ENCODE measurements at regions of chr11 and their contacts with region 1.

Region 1: DNA sequence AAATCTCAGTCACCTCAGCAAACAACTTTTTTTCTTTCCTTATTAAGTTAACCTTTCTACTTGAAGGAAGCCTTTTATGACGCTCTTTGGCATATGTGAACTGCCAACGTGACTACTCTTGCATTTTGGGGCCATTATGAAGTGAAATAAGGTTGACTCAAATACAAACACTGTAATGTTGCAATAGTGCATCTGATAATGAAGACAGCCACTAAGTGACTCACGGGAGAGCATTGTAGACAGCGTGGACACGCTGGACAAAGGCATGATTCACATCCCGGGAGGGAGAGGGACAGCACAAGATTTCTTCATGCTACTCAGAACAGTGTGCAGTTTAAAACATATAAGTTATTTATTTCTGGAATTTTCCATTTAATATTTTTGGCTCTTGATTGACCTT is 560.8 kb downstream of the ETS1 start:
- DNase-seq: no peak
- H3K4me3 ChIP-seq: no peak overlapping the region
- H3K4me3 Mint-ChIP-seq: no peak overlapping the region
- H3K27ac ChIP-seq: no peak overlapping the region
- H3K27ac Mint-ChIP-seq: no peak overlapping the region
- H3K4me1 ChIP-seq: no peaks in the 10 kb centered on the region
- H3K4me1 Mint-ChIP-seq: peaks cover 0 to 4% (median 1%) of the 10 kb centered on the region in 4 donors
- H3K27me3 ChIP-seq: no peaks in the 10 kb centered on the region
- H3K27me3 Mint-ChIP-seq: peaks cover 3 to 4% of the 10 kb centered on the region in 2 donors

Region 2: DNA sequence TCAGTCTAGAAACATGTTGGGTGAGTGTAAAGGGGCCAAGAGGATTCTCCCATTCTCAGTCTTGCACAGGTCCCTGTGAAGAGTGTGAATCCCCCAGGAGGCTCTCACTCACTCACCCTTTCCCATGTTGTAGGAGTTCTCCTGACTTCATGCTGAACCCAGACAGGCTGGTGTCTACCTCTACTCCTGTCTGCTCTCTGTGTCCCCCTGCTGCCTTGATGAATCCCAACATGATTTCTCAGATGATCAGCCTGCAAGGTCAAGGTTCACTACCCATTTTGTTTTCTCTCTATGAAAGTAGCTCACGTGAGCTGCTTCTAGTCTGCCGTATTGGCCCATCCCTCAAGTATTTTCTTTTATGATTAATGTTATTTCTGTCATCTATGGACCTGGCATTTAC is 60.2 kb after region 1 on chr11:
- CTCF ChIA-PET with region 1: interaction called, 11 read pairs
- POLR2A ChIA-PET with region 1: interaction called, 3 read pairs
- intact Hi-C with region 1: loop called (anchors 1 kb)
- DNase-seq: peak in 1 of 5 donors; percentile 10
- H3K4me3 ChIP-seq: no peak overlapping the region
- H3K4me3 Mint-ChIP-seq: peak overlapping the region in 3 of 8 donors; percentile 31 to 53 (median 44)
- H3K27ac ChIP-seq: no peak overlapping the region
- H3K27ac Mint-ChIP-seq: peak overlapping the region in 6 of 7 donors; percentile 8 to 68 (median 25)
- H3K4me1 ChIP-seq: peaks cover 20% of the 10 kb centered on the region
- H3K4me1 Mint-ChIP-seq: peaks cover 30 to 52% (median 41%) of the 10 kb centered on the region in 4 donors
- H3K27me3 ChIP-seq: no peaks in the 10 kb centered on the region
- H3K27me3 Mint-ChIP-seq: no peaks in the 10 kb centered on the region

Region 3: DNA sequence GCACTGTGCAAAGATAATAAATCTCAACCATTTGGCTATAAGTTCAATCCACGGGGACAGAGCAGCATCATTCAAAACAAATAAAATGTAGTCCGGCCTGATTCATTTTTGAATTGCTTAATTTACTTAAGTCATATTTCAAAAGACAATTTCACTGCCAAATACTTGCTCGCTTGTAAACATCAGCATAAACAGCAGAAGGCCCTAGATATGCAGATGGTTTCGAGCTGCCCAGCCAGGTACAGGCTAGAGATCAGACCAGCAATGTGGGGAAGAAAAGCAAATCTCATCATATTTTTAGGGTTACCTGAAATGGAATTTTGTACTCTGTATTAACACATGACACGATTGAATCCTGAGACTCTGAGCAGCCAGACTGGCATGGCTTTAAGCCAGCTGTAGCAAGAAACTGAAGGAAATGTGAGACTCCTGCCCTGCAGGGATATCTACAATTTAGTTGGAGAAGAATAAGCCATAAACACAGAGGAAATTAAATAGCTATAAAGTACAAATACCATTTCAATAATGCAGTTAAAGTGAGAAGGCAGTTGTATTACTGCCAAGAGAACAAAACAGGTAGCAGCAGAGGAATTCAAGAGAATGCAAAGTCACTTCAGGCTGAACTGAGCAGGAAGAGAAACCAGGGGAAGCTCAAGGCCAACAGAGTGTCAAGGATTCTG is 120.5 kb after region 1 on chr11:
- CTCF ChIA-PET with region 1: interaction called, 12 read pairs
- POLR2A ChIA-PET with region 1: no interaction called
- intact Hi-C with region 1: no loop called
- DNase-seq: no peak
- H3K4me3 ChIP-seq: no peak overlapping the region
- H3K4me3 Mint-ChIP-seq: no peak overlapping the region
- H3K27ac ChIP-seq: no peak overlapping the region
- H3K27ac Mint-ChIP-seq: peak overlapping the region in 2 of 7 donors; percentile 48 to 83
- H3K4me1 ChIP-seq: no peaks in the 10 kb centered on the region
- H3K4me1 Mint-ChIP-seq: peaks cover 4 to 11% (median 6%) of the 10 kb centered on the region in 4 donors
- H3K27me3 ChIP-seq: no peaks in the 10 kb centered on the region
- H3K27me3 Mint-ChIP-seq: no peaks in the 10 kb centered on the region

Region 4: DNA sequence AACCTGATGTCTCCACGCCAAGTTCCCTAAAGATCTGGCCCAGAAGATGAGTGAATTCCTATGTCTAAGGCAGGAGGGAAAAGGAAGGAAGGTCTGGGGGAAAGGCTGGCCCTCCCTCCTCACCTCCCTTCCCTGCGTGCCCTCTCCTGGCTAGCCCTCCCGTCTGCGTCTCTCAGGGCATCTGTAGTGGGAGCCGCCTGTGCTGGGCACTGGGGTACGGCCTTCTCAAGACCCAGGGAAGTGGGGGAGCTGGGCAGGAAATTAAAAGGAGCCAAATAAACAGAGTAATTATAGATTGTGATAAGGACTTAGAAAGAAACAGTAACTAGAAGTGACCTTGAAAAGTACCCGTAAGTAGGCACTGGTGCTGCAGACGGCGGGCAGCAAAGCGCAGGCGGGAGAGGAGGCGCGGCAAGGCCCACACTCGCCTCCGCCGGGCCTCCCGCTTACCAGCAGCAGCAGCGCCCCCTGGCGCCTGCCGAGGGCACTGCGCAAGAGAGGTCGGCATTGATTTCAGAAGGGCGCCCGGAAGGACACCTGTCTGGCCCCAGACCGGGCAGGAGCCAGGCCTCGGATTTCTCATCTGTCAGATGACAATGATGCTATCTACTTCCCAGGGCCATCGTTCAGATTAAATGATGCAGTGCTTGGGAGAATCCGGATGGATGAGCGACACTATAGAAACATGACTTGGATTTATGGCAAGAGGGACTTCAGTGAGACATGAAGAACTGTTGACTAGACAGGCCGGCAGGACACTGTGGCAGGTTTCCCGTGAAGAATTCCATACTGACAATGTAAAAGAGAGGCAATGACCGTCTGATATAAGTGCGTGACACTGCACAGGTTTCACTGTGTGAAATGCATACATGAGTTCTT is 833.2 kb after region 1 on chr11:
- CTCF ChIA-PET with region 1: no interaction called
- POLR2A ChIA-PET with region 1: no interaction called
- intact Hi-C with region 1: loop called (anchors 1 kb)
- DNase-seq: peak; percentile 66 to 76 (median 73)
- H3K4me3 ChIP-seq: no peak overlapping the region
- H3K4me3 Mint-ChIP-seq: peak overlapping the region in 2 of 8 donors; percentile 14 to 32
- H3K27ac ChIP-seq: no peak overlapping the region
- H3K27ac Mint-ChIP-seq: peak overlapping the region in 2 of 7 donors; percentile 14 to 71
- H3K4me1 ChIP-seq: no peaks in the 10 kb centered on the region
- H3K4me1 Mint-ChIP-seq: peaks cover 4 to 11% (median 7%) of the 10 kb centered on the region in 4 donors
- H3K27me3 ChIP-seq: no peaks in the 10 kb centered on the region
- H3K27me3 Mint-ChIP-seq: peaks cover 0 to 2% of the 10 kb centered on the region in 2 donors

Region 5: DNA sequence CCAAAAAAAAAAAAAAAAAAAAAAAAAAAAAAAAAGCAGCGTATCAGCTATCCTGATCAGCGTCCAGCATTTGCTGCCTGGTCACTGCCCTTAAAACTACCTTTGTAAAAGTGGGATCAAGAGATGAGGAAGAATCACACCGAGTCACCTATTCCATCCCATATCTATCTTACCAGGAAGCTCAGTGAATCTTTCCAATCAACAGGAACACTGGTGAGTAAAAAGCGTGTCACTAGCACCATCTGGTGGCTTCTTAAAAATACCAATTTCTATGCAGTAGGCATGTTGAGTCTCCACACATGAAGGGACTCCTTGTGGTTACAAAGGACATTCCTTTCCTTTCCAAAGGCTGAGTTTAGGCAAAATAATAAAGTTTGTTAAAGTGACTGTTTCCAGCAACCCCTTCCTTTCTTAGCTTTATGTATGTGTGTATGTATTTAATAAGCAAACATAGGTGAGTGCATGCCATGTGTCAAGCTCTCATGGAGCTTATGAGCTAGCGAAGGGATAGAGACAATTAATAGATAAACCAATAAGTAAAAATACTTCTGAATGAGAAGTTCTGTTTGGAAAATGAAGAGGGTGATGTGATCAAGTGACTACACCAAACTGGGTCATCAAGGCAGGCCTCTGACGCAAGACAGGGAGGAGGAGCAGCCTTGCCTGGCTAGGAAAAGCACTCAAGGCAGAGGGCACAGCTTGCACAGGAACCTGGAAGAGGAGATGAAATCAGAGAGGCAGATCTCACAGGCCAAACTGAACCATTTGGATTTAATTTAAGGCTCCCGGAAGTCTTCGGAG is 930.0 kb after region 1 on chr11:
- CTCF ChIA-PET with region 1: no interaction called
- POLR2A ChIA-PET with region 1: no interaction called
- intact Hi-C with region 1: loop called (anchors 1 kb)
- DNase-seq: peak in 4 of 5 donors; percentile 34 to 41 (median 38)
- H3K4me3 ChIP-seq: no peak overlapping the region
- H3K4me3 Mint-ChIP-seq: no peak overlapping the region
- H3K27ac ChIP-seq: no peak overlapping the region
- H3K27ac Mint-ChIP-seq: no peak overlapping the region
- H3K4me1 ChIP-seq: no peaks in the 10 kb centered on the region
- H3K4me1 Mint-ChIP-seq: peaks cover 0 to 2% (median under 1%) of the 10 kb centered on the region in 4 donors
- H3K27me3 ChIP-seq: no peaks in the 10 kb centered on the region
- H3K27me3 Mint-ChIP-seq: peaks cover 6 to 14% of the 10 kb centered on the region in 2 donors